ENCODE measurements at regions of chr2 and their contacts with region 1.

Region 1: GRCh38 chr2:16617282-16618261 is 48.1 kb downstream of the CYRIA start:
- H3K4me3 Mint-ChIP-seq: no peak overlapping the region
- H3K27ac Mint-ChIP-seq: peak overlapping the region; percentile 89
- H3K4me1 Mint-ChIP-seq: peaks cover 81% of the 10 kb centered on the region
- H3K27me3 Mint-ChIP-seq: no peaks in the 10 kb centered on the region

Region 2: GRCh38 chr2:16413285-16413684 is 204.3 kb before region 1 on chr2:
- intact Hi-C with region 1: no loop called
- H3K4me3 Mint-ChIP-seq: no peak overlapping the region
- H3K27ac Mint-ChIP-seq: no peak overlapping the region
- H3K4me1 Mint-ChIP-seq: no peaks in the 10 kb centered on the region
- H3K27me3 Mint-ChIP-seq: no peaks in the 10 kb centered on the region

Region 3: DNA sequence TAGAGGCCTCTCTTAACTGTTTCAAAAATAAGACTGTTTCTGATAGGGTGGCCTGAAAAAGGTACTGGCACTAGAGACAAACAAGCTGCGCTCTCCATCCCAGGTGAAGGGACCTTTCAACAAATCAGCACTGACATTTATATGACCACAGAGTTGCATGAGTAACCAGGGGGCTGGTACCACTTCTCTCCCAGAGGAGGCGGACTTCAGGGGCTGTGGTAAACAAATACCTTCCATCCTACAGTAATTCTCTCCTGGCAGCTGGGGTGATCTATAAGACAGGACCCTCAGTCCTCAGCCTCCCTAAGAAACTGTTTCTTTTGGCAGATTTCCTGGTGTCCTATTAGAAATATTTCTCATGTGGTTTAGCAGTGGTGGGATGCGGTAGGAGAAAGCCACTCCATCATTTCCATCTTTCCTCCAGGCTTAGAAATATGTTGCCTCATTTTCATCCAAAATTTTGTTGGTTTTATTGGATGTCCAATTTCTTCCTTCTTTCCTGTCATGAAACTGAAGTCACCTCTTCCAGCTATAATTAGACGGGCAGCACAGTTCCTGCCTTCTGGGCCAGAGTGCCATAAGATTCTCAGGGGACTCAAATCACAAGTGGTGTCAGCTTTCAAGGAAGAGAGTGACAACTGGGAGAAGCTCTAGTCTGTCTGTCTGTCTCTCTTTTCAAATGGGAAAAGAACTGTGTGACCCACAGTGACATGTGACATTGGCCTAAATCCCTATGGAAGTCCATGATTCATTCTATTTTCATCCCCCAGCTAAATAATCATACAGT is 48.4 kb before region 1 on chr2:
- intact Hi-C with region 1: no loop called
- H3K4me3 Mint-ChIP-seq: no peak overlapping the region
- H3K27ac Mint-ChIP-seq: no peak overlapping the region
- H3K4me1 Mint-ChIP-seq: peaks cover 6% of the 10 kb centered on the region
- H3K27me3 Mint-ChIP-seq: no peaks in the 10 kb centered on the region

Region 4: DNA sequence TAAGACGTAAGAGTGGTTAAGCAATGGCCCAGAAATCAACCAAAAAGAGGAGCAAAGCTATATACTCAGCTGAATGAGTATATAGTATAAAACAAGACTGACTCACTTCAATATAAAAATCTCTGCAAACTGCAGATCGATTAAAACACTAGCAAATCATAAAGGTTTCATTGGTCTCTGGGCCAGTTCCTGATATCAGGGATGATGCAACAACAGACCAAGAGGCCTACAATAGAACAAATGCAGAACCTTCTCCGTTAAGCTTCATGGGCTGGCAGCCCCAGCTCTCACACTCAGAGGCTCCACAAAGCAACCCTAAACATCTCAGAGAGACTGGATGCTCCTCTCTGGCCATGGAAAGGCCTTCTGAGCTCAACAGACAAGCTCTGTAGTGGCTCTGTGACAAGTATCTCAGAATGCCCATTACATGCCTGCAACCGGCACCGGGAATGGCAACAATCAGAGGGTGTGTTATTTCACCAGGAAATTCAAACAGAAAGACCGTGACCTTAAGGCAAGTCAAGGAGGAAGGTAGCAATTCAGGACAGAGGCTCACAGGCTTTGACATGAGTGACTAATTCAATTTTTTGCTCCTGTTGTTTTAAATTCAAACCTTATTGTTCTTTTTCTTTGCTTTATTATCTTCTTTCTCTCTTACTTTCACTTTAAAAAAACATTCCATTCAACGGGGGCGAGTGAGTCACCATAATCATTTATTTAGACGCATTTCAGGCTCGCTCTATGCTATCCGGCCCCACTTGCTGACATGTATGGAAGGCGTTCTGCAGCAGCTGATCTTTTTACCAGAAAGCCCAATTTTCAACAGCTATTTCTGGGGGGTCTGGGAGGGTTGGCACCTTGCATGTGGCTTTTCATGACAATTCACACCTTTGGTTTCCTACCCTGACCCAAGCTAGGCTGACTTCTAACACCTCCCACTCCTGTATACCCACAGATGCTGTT is 33.0 kb after region 1 on chr2:
- intact Hi-C with region 1: loop called (anchors 5 kb)
- H3K4me3 Mint-ChIP-seq: peak overlapping the region; percentile 62
- H3K27ac Mint-ChIP-seq: peak overlapping the region; percentile 87
- H3K4me1 Mint-ChIP-seq: peaks cover 79% of the 10 kb centered on the region
- H3K27me3 Mint-ChIP-seq: no peaks in the 10 kb centered on the region